ENCODE measurements at regions of chr18 and their contacts with region 1.

Region 1: DNA sequence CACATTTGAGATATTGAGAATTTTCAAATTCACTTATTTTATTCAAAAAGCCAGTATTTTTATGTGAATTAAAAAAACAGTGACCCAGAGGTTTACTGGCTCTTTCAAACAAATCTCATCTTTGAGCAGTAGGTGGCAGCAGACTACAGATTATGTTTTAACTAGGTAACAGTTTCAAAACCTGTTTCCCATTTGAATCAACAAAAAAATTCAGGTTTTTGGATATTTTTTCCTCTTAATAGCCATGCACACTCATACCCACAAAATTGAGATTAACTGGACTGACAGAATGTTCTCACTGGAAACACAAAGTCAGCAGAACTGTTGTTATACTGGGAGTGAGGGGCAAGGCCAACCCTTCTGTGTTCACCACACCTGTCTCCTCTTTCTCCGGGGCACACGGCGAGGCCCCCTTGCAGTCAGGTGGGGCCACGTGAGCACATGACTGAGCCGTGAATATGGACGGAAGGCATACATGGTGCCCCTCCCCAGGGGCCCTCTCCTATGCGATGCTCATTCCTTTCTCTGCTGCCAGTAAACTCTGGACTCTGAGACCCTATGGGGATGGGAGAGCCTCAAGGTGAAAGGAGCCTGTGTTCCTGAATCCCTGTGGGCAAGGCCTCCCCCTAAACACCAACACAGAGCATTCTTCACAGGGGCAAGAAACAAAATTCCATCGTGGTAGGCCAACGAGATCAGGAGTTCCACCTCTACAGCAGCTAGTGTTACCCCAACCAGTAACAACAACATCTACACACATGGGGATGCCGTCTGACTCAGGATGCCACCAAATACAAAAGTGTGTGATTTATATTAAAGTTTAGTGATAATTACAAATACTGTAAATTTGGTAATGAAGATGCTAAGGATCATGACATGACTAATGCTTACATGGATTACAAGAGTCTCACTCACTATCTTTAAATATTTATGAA is 80.4 kb downstream of the LPIN2 start:
- DNase-seq: no peak
- H3K4me3 ChIP-seq: no peak overlapping the region
- H3K27ac ChIP-seq: peak overlapping the region; percentile 23 to 52
- H3K4me1 ChIP-seq: peaks cover 0 to 26% (median 6%) of the 10 kb centered on the region in 4 donors
- H3K27me3 ChIP-seq: no peaks in the 10 kb centered on the region
- CTCF ChIP-seq: peak; percentile 76 to 87

Region 2: GRCh38 chr18:2994603-2995432 is 62.3 kb after region 1 on chr18:
- intact Hi-C with region 1: loop called (anchors 10 kb)
- DNase-seq: peak in 1 of 2 donors; percentile 76
- H3K4me3 ChIP-seq: no peak overlapping the region
- H3K27ac ChIP-seq: peak overlapping the region; percentile 80 to 87
- H3K4me1 ChIP-seq: peaks cover 7 to 74% (median 39%) of the 10 kb centered on the region in 4 donors
- H3K27me3 ChIP-seq: no peaks in the 10 kb centered on the region
- CTCF ChIP-seq: peak; percentile 28 to 59

Region 3: DNA sequence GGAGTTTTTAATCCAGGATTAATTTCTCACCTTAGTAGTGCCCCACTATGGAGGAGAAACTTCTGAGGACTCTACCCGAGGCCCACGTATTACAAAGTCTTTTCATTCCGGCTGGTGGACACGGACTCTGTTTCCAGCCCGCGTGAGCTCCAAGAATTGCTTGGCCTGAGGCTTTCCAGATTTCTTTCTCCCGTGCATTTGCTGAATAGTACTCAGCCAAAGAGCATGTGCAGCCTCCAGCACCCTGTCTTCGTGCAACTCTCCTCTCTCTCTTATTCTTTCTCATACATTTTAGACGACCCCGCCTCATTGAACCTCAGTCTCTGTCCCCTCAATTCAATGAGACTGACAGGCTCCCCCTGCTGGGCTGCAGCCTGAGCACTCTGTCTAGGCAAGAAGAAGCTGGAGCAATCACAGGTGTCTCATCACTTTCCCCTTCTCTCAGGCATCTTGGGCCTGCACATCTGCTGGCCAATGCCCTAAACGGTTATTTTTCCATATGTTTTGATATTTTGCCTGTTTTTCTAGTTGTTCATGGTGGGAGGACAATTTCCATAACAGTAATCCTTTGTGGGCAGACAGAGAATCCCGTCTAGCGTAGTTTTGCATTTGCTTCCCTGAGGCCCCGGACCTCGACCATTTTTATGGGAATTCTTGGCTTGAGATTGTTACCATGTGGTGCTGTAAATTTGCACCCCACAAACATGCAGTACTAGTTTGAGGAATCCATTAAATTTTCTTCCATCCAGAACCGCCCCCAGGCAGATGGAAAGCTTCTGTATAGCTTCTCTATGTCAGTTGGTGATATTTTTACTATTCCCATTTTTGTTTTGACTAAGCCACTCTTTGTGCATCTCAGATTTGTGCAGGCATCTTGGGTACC is 130.5 kb after region 1 on chr18:
- intact Hi-C with region 1: loop called (anchors 1 kb)
- DNase-seq: peak; percentile 72 to 79
- H3K4me3 ChIP-seq: no peak overlapping the region
- H3K27ac ChIP-seq: no peak overlapping the region
- H3K4me1 ChIP-seq: peaks cover 0 to 10% (median 7%) of the 10 kb centered on the region in 4 donors
- H3K27me3 ChIP-seq: no peaks in the 10 kb centered on the region
- CTCF ChIP-seq: peak; percentile 62 to 67

Region 4: GRCh38 chr18:3132700-3133099 is 200.2 kb after region 1 on chr18:
- intact Hi-C with region 1: loop called (anchors 5 kb)
- DNase-seq: no peak
- H3K4me3 ChIP-seq: no peak overlapping the region
- H3K27ac ChIP-seq: peak overlapping the region in 1 of 2 donors; percentile 13
- H3K4me1 ChIP-seq: peaks cover 0 to 15% (median 0%) of the 10 kb centered on the region in 4 donors
- H3K27me3 ChIP-seq: no peaks in the 10 kb centered on the region
- CTCF ChIP-seq: no peak